Left ventricle myocardium inferior (tissue), 1 donor: ENCODE measurements at regions of chr14 and their contacts with region 1.

Region 1: DNA sequence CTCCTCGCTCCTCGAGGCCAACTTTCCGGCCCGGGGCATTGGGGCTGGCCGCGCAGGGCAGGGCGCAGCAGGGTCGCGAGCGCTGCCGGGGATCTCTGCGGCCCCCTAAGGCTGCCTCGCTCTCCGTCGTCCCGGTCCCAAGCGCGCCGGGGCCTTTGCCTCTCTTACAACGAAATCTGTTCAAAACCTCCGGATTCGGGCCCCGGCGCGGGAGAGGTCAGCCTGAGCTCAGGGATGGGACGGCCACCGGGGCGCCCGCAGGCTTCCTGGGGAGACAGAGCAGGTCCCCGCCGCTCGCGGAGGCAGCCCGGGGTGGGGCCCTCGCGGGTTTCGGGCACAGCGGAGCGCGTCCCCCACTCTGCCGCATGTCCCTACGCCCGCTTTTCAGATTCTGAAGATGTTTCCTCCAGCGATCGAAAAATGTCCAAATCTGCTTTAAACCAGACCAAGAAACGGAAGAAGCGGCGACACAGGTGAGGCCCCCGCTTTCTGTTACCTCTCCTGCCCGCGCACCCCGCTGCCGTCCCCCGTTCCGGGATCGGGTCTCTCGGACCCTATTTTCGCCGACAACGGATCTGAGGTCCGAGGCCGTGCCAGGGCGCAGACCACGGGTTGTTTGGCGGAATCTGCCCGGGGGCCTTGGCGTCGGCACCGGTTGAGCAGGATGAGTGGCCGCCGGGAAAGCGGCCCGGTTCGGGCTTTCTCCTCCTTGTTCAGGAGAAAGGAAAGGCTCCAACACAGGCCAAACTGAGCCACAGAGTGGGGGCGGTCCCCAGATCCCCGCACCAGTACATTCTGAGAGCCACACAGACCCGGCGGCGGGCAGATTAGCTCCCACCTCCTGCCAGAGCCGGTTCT is 1.8 kb downstream of the VSX2 start:
- DNase-seq: no peak
- H3K4me3 ChIP-seq: peak overlapping the region; percentile 59
- H3K27ac ChIP-seq: no peak overlapping the region
- H3K4me1 ChIP-seq: peaks cover 26% of the 10 kb centered on the region
- H3K27me3 ChIP-seq: peaks cover 98% of the 10 kb centered on the region
- CTCF ChIP-seq: no peak

Region 2: GRCh38 chr14:73903028-73903427 is 338.0 kb before region 1 on chr14:
- intact Hi-C with region 1: no loop called
- DNase-seq: no peak
- H3K4me3 ChIP-seq: no peak overlapping the region
- H3K27ac ChIP-seq: no peak overlapping the region
- H3K4me1 ChIP-seq: no peaks in the 10 kb centered on the region
- H3K27me3 ChIP-seq: no peaks in the 10 kb centered on the region
- CTCF ChIP-seq: no peak

Region 3: DNA sequence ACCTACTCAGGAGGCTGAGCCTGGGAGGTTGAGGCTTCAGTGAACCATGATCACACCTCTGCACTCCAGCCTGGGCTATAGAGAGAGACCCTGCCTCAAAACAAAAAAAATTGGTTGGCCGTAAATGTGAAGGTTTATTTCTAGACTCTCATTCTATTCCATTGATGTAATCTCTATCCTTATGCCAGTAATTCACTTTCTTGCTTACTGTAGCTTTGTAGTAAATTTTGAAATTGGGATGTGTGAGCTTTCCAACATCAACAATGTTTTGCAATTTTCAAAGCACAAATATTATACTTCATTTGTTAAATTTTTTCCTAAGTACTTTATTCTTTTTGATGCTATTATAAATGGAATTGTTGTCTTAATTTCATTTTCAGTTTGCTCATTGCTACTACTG is 131.7 kb before region 1 on chr14:
- intact Hi-C with region 1: loop called (anchors 10 kb)
- DNase-seq: no peak
- H3K4me3 ChIP-seq: no peak overlapping the region
- H3K27ac ChIP-seq: no peak overlapping the region
- H3K4me1 ChIP-seq: no peaks in the 10 kb centered on the region
- H3K27me3 ChIP-seq: no peaks in the 10 kb centered on the region
- CTCF ChIP-seq: no peak

Region 4: DNA sequence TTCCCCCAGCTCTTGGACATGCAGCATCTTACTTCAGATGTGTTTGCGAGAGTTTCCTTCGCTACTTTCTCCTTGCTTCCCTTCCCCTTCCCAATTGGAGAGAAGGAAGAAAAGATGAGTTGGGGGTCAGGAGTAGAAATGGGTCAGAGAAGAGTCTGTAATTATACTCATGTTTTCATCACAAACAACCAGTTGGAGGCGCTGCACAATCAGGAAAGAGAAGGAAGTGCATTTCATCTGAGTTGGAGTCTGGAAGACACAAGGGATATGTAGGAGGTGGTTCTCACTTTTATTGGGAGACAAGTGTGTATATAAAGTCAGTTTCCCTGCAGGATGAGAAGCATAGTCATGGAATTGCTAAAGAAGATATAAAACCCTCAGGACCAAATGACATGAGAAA is 33.1 kb before region 1 on chr14:
- intact Hi-C with region 1: no loop called
- DNase-seq: no peak
- H3K4me3 ChIP-seq: no peak overlapping the region
- H3K27ac ChIP-seq: no peak overlapping the region
- H3K4me1 ChIP-seq: no peaks in the 10 kb centered on the region
- H3K27me3 ChIP-seq: peaks cover 18% of the 10 kb centered on the region
- CTCF ChIP-seq: no peak